ENCODE measurements at regions of chr11 and their contacts with region 1.

Region 1: GRCh38 chr11:117614728-117615127 is 182.3 kb downstream of the DSCAML1 start:
- DNase-seq: peak; percentile 36

Region 2: GRCh38 chr11:117480221-117480620 is 134.5 kb before region 1 on chr11:
- intact Hi-C with region 1: loop called in 1 of 2 experiments (anchors 1 kb)
- DNase-seq: no peak

Region 3: DNA sequence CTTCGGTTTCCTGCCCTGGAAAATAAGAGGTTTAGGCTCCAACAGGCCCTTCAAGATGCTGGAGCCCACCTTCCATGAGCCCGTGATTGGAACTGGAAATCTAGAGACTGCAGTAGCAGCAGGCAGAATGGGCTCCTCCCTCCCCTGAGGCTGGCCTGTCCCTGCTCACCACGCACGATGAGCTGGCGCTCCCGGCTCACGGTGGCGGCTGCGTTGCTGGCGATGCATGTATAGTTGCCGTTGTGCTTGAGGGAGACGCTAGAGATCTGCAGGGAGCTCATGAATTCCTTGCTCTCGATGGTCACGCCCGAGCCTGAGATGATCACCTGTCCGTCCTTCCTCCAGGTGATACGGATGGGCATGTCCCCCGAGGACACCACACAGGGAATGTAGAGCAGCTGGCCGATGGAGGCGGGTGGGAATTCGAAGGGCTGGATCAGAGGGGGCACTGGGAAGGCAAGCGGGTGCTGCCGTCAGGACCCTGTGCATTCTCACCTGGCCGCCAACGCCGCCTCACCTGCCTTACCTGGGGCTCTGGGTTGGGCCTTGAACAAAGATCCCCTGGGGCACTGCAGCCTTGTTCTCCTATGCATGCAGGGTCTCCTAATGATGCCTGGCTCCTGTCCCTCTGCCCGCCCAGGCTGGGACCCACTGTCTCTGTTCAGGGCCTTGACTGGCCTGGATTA is 109.3 kb before region 1 on chr11:
- intact Hi-C with region 1: loop called in 1 of 2 experiments (anchors 1 kb)
- DNase-seq: no peak